Activated CD4-positive, alpha-beta memory T cell treated with anti-CD3 and anti-CD28 coated beads for 36 hours (primary cell): ENCODE measurements at regions of chr20 and their contacts with region 1.

Region 1: DNA sequence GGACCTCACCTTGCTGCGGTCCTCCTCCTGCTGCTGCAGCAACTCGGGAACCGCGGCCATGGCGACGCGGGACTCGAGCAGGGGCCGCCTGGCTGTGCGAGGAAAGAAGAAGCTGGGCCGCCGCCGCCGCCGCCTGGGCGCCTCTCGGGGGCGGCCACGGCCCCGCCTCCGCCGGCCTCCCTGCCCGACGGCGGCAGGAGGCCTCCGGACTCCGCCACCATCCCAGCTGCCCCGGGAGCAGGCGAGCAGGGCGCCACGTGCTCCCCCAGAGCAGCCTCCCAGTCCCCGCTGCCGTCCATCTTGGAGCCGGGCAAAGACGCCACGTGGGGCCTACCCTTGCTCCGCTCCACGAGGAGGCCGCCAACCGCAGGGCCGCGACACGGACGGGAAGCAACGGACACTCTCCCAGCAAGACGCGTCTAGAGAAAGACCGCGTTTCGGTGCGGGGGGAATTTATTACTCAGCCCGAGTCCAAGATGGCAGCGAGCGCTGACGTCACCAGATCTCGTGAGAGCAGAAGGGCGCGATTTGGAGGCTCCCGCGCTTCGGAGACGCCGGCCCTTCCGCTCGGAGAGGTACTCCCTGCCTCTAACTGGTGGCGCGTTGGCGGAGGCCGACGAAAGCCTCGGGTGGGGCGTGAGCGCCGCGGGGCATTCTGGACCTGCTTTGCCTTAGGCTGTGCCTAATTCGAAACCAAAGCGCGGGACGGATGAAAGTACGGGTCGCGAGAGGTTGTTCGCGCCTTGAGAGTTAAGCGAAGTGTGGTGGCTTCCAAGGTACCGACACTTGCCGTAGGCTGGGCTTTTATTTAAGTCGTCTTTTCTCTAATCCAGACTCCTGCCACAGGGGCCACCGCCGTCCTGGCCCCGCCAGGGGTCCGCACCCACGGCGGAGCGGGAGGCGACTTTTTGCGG is at the starts of genes MGME1 and SNX5:
- DNase-seq: peak; percentile 100
- H3K4me3 Mint-ChIP-seq: peak within 1 kb of the TSS; percentile 96
- H3K27ac Mint-ChIP-seq: peak within 1 kb of the TSS; percentile 99
- H3K4me1 Mint-ChIP-seq: peaks cover 43% of the 10 kb centered on the region
- H3K27me3 Mint-ChIP-seq: no peaks in the 10 kb centered on the region
- total RNA-seq, gene MGME1: 31.0 to 34.7 TPM
- total RNA-seq, gene SNX5: 234 to 256 TPM

Region 2: GRCh38 chr20:17536944-17537444 is 431.6 kb before region 1 on chr20:
- CTCF ChIA-PET with region 1: no interaction called
- POLR2A ChIA-PET with region 1: no interaction called
- intact Hi-C with region 1: loop called (anchors 10 kb)
- DNase-seq: peak; percentile 78
- H3K4me3 Mint-ChIP-seq: no peak overlapping the region
- H3K27ac Mint-ChIP-seq: peak overlapping the region; percentile 28
- H3K4me1 Mint-ChIP-seq: peaks cover 16% of the 10 kb centered on the region
- H3K27me3 Mint-ChIP-seq: peaks cover 9% of the 10 kb centered on the region

Region 3: DNA sequence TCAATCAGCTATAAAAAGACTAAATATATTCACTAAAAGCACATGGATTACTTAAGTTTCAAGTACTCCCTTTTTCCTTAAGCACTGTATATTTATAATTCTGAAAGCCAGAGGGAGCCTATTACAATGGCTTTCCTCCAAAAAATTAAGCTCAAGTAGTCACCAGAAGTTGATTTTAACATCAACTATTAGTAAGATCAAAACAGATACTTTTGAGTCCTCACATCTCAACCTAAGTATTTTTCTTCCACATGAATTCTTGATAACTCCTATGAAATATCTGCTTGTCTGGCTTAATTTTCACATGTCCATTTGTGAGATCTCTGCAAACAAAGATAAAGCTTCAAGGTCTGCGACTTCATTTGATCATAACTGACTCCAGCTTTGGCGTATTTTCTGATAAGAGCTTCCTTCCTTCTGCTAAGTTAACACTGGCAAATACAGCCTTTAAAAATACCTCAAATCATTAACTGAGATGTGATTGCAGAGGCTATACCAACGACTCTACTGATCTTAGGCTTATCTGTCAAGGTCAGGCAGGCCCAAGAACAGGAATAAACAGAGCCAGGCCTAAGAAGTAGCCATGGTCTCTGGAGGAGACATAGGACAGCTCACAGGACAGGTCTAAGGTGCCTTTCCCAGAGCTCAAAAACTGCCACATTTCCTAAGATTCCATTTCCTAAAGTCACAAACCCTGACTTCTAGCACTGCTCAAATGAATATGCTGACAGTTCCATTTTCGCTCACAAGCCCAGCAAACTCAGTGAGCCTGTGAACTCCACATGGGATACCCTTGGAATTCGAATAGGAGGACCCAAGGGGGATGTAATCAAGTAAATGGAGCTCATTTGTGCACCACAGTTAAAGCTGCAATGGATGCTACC is 10.0 kb before region 1 on chr20:
- CTCF ChIA-PET with region 1: interaction called, 7 read pairs
- POLR2A ChIA-PET with region 1: interaction called, 19 read pairs
- intact Hi-C with region 1: loop called (anchors 1 kb)
- DNase-seq: no peak
- H3K4me3 Mint-ChIP-seq: no peak overlapping the region
- H3K27ac Mint-ChIP-seq: peak overlapping the region; percentile 49
- H3K4me1 Mint-ChIP-seq: peaks cover 87% of the 10 kb centered on the region
- H3K27me3 Mint-ChIP-seq: no peaks in the 10 kb centered on the region

Region 4: DNA sequence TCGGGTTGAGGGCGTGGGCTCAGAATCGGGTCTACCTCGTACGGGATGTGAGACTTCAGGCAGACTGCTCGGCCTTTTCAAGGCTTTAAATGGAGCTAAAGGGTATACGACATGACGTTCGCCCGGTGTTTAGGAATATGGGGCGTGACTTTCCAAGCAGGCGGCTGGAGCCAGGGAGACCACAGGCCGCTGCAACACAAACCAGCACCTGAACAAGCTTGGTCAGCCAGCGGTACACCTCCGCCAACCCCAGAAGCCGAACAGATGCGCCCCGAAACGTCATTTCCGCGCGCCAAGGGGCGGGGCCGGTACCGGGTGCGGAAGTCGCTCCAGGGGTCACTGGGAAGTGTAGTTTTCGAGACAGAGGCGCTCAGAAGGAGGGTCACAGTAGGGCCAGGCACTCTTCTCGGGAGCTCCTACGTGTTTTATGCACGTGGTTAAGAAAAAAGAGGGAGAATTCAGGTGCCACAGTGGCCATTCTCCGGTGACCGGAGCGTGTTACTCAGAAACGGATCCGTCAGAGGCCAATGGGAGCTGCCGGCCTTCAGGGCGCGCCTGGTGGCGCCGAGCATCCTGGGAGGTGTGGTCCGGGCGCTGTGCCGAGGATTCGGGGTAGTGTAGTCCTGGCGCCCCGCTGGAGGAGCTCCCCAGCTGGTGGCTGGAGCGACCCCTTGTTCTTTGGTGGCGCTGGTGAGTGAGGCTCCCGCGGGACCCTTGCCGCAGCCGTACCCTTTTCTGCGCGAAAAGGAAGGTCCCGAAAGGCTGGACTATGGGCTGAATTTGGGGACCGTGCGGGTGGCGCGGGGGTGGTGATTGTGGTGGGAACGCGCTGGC is 319.5 kb after region 1 on chr20 and contains the start of gene ZNF133:
- CTCF ChIA-PET with region 1: no interaction called
- POLR2A ChIA-PET with region 1: no interaction called
- intact Hi-C with region 1: loop called (anchors 1 kb)
- DNase-seq: peak; percentile 98
- H3K4me3 Mint-ChIP-seq: peak within 1 kb of the TSS; percentile 96
- H3K27ac Mint-ChIP-seq: peak within 1 kb of the TSS; percentile 98
- H3K4me1 Mint-ChIP-seq: peaks cover 14% of the 10 kb centered on the region
- H3K27me3 Mint-ChIP-seq: peaks cover 17% of the 10 kb centered on the region
- total RNA-seq, gene ZNF133: 7.5 to 9.0 TPM

Region 5: DNA sequence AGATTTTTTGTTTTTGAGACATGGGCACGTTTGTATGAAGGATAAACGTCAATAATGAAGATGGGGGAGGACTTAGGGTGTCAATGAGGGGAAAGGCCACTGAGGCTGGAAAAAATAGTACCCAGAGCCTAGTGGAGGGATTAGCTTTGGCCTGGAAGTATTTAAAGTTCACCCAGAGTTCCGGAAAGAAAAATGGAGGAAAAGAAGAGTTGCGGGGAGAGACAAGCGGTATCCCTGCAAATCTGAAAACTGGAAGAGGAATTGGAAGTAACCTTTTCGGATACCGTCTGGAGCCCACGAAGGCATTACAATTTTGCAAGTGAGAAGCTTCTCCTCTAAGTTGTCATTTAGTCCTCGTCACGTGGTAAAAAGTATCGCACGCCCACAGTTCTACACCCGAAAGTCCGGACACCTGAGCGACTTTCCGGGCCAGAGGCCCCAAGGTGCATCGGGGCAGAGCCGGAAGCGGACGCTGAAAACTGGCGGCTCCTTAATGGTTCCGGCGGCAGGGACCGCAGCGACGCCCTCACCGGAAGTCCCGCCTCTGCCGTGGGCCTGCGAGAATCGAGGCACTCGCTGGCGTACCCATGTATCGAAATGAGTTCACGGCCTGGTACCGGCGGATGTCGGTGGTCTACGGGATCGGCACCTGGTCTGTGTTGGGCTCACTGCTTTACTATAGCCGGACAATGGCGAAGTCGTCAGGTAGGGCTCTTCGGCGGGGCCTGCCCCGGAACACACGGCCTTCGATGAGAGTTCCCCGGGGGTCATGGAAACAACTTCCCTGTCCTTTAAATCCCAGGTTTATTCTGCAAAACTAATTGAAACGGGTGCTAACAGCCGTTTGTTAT is 598.5 kb after region 1 on chr20 and contains the start of gene SMIM26:
- CTCF ChIA-PET with region 1: no interaction called
- POLR2A ChIA-PET with region 1: no interaction called
- intact Hi-C with region 1: loop called (anchors 5 kb)
- DNase-seq: peak; percentile 96
- H3K4me3 Mint-ChIP-seq: peak within 1 kb of the TSS; percentile 90
- H3K27ac Mint-ChIP-seq: peak within 1 kb of the TSS; percentile 91
- H3K4me1 Mint-ChIP-seq: peaks cover 11% of the 10 kb centered on the region
- H3K27me3 Mint-ChIP-seq: no peaks in the 10 kb centered on the region
- total RNA-seq, gene SMIM26: 56.0 to 59.0 TPM